ENCODE measurements at regions of chr6 and their contacts with region 1.

Region 1: DNA sequence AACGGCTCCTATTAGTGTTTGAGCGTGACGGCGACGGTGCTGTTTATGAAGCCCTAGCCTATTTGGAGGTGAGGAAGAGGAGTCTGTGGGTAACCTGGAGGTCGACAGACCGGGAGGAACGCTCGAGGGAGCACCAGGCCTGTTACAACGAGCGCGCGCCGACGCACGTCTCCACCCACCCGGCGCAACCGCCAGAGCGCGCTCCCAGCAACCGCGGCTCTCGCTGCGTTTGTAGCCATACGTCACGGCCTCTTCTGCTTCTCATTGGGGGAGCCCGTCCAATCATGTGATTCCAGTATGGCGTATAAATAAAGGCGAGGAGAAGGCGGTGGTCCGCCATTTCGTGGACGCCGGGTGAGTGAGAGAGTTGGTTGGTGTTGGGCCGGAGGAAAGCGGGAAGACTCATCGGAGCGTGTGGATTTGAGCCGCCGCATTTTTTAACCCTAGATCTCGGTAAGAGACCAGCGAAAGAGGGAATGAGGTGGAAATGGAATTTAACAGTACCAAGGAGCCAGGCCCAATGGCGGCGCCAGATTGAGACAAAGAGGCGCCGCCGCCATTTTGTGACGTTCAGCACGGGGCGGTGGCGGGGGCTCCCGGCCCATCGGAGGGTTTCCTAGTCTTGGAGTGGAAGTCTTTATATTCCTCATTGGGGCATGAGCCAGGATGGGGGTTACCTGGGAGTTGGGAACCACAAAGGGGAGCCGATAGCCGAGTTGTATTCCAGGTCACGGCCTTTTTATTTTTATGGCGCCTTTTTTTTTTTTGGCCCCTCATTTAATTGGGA is at the start of gene SRSF3:
- DNase-seq: peak; percentile 96
- H3K4me3 Mint-ChIP-seq: peak within 1 kb of the TSS; percentile 97
- H3K27ac Mint-ChIP-seq: peak within 1 kb of the TSS; percentile 100
- H3K4me1 Mint-ChIP-seq: peaks cover 44% of the 10 kb centered on the region
- H3K27me3 Mint-ChIP-seq: no peaks in the 10 kb centered on the region
- total RNA-seq, gene SRSF3: 525 and 546 TPM in 2 replicates

Region 2: GRCh38 chr6:36442671-36443470 is 151.4 kb before region 1 on chr6 and contains the starts of genes KCTD20 and PXT1:
- intact Hi-C with region 1: loop called (anchors 1 kb)
- DNase-seq: peak; percentile 86
- H3K4me3 Mint-ChIP-seq: peak within 1 kb of the TSS; percentile 96
- H3K27ac Mint-ChIP-seq: peak within 1 kb of the TSS; percentile 95
- H3K4me1 Mint-ChIP-seq: peaks cover 48% of the 10 kb centered on the region
- H3K27me3 Mint-ChIP-seq: no peaks in the 10 kb centered on the region
- total RNA-seq, gene KCTD20: 62.4 and 62.8 TPM in 2 replicates
- total RNA-seq, gene PXT1: 0.16 and 0.29 TPM in 2 replicates

Measured in activated T-helper 1 cell treated with anti-CD3 and anti-CD28 coated beads, Interleukin-12 subunit alpha, Interleukin-12 subunit beta, Interleukin-2, Interleukin-4 antibody, amounts not matched to agents 30 ng/mL and 10 ng/mL and 1 ng/mL, durations not matched to agents 14 hours and 24 hours and 36 hours (primary cell).